ENCODE measurements at regions of chr9 and their contacts with region 1.

Region 1: DNA sequence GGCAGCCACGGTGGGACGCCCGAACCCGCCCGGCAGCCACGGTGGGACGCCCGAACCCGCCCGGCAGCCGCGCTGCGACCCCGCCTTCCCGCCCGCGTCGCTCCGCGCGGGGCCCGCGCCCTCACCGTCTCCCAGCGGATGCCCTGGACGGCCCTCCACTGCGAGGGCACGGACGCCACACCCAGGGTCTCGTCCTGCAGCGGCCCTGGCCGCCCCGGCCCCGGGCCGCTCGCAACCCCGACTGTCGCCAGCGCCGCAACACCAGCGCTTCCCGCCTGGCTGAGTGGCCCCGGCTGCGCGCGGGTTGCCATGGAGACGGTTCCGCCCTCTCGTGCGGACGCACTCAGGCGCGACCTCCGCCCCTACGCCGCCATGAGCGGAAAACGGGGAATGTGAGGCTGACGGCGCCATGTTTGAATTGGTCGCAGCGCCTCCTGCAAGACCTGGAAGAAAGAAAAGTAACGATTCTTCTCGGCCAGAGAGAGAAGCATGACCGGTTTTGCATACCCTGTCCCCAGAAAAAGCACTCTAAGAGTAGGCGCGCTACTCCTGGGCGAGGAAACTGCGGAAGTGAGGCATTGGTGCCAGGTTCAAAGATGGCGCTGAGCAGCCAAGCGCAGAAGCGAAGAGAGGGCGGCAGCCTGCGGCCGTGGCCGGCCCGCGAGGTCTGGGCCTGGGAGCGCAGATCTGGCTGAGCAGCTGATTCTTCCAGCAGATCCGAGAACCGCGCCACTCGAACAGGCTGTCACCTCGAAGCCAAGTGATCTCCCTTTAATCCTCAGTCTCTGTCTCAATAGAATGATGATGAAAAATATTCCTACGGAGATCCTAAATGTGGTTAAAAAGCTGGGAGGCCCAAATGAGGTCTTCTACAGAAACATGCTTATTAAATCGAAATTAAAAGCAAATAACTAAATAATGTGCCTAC is at the start of gene DYNC2I2:
- DNase-seq: peak; percentile 97
- H3K4me3 Mint-ChIP-seq: peak within 1 kb of the TSS; percentile 93
- H3K27ac Mint-ChIP-seq: peak within 1 kb of the TSS; percentile 100
- H3K4me1 Mint-ChIP-seq: peaks cover 11% of the 10 kb centered on the region
- H3K27me3 Mint-ChIP-seq: no peaks in the 10 kb centered on the region
- total RNA-seq, gene DYNC2I2: 32.4 to 32.8 TPM

Region 2: DNA sequence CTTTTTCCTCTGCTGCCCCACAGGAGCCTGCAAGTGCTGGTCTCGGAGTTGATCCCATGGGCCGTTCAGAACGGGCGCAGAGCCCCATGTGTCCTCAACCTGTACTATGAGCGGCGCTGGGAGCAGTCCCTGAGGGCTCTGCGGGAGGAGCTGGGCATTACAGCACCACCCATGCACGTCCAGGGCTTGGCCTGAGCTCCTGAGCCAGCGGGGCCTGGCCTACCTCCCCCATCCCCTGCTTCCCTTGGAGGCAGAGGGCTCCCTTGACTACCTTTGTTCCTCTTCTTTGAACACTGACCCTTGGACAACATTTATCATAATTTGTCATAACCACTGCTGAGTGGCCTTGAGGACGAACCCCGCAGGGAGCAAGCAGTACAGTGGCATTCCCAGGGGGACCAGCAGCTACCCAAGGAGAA is 323.2 kb before region 1 on chr9:
- CTCF ChIA-PET with region 1: no interaction called
- intact Hi-C with region 1: no loop called
- DNase-seq: no peak
- H3K4me3 Mint-ChIP-seq: no peak overlapping the region
- H3K27ac Mint-ChIP-seq: no peak overlapping the region
- H3K4me1 Mint-ChIP-seq: no peaks in the 10 kb centered on the region
- H3K27me3 Mint-ChIP-seq: no peaks in the 10 kb centered on the region

Region 3: DNA sequence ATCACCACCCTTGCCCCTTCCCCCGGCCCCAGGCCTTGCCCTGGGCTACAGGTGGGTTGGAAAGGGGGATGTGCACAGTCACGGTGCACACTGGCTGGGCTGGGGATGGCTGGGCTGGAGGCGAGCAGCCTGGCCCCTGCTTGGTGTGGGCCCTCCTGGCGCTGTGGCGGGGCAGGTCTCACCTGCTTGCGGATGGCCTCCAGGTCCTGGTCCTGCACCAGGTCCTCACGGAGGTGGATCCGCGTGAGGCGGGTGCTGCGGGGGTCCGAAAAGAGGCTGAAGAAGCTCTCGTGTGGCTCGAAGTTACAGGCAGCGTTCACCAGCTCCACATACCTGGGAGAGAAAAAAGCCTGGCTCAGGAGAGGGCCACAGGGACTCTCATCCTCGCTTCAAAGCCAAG is 96.9 kb after region 1 on chr9:
- CTCF ChIA-PET with region 1: no interaction called
- intact Hi-C with region 1: no loop called
- DNase-seq: no peak
- H3K4me3 Mint-ChIP-seq: no peak overlapping the region
- H3K27ac Mint-ChIP-seq: no peak overlapping the region
- H3K4me1 Mint-ChIP-seq: no peaks in the 10 kb centered on the region
- H3K27me3 Mint-ChIP-seq: no peaks in the 10 kb centered on the region

Region 4: DNA sequence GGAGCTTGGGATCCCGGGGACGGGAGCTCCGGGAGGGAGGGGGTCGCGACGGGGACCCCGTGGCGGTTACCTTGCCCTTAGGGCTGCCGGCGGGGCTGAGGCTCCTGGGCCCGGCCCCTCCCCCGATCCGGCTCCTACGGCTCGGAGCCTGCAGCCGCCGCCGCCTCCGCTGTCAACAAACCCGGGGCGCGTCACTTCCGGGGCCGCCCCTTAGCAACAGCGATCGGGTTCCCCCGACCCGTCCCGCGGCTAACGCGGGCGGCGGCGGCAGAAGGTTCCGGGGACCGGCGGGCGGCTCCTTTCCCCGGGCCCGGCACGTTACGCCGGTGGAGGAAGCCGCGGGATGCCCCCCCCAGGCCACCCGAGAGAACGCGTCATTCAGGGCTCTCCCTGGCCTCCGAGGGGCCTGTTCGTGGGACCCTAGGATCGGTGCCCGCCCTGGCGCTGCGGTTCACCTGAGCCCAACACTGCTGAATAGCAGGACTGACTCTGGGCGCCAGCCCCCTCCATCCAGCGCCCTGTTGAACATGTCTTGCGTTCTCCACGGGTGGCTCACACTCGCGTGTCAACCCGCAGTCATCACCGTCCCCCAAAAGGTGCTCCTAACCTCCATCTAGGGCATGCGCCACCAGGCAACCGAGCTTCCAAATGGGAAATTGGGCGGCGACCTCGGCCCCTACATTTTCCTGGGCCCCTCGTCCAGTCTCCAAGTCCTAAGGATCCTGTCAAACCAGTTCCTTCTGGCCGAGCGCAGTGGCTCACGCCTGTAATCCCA is 115.3 kb after region 1 on chr9 and contains the start of gene ZER1:
- CTCF ChIA-PET with region 1: no interaction called
- intact Hi-C with region 1: loop called (anchors 5 kb)
- DNase-seq: peak; percentile 95
- H3K4me3 Mint-ChIP-seq: peak within 1 kb of the TSS; percentile 95
- H3K27ac Mint-ChIP-seq: peak within 1 kb of the TSS; percentile 90
- H3K4me1 Mint-ChIP-seq: peaks cover 24% of the 10 kb centered on the region
- H3K27me3 Mint-ChIP-seq: no peaks in the 10 kb centered on the region
- total RNA-seq, gene ZER1: 9.9 to 11.0 TPM

Region 5: DNA sequence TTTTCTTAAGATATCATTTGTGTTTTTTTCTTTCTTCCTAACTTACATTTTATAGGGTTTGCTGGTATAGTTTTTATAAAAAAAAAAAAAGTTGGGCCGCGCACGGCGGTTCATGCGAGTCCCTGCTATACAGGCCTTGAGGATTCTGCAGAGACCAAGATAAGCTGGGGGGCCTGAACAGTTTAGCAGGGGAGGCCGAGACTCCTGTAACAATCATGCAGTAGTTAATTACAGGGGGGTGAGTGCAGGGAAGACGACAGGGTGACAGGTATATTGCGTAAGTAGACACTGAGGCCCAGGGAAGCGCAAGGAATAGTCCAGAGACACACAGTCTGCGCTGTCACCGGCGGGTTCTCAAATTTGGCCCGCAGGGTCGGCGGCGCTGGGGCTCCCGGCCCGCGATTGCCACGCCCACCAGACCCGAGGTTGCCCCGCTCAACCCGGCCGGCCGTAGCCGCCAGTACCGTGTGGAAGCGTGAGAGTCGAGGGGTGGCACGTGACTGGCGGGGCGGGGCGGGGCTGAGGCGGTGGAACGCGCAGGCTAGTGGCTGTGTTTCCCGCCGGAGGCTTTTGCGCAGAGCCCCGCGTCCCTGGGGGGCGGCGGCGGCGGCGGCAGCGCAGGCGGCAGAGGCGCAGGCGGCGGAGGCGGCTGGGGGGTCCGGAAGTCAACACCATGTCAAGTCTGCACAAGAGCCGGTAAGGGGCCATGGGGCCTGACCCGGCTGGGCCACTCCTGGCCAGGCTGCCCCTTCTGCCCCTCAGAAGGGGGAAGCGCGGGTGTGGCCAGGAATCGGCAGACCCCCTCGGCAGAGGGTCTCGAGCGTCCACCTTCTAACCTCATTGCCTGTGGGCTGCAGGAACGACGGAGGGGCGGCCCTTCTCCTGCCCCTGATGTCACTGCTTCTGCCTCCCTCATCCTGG is 130.3 kb after region 1 on chr9 and contains the start of gene TBC1D13:
- CTCF ChIA-PET with region 1: no interaction called
- intact Hi-C with region 1: loop called (anchors 5 kb)
- DNase-seq: peak; percentile 91
- H3K4me3 Mint-ChIP-seq: peak within 1 kb of the TSS; percentile 90
- H3K27ac Mint-ChIP-seq: peak within 1 kb of the TSS; percentile 81
- H3K4me1 Mint-ChIP-seq: peaks cover 26% of the 10 kb centered on the region
- H3K27me3 Mint-ChIP-seq: no peaks in the 10 kb centered on the region
- total RNA-seq, gene TBC1D13: 8.3 to 9.0 TPM

Region 6: GRCh38 chr9:128927731-128928411 is 271.2 kb after region 1 on chr9:
- CTCF ChIA-PET with region 1: no interaction called
- intact Hi-C with region 1: no loop called
- DNase-seq: peak; percentile 68
- H3K4me3 Mint-ChIP-seq: no peak overlapping the region
- H3K27ac Mint-ChIP-seq: no peak overlapping the region
- H3K4me1 Mint-ChIP-seq: peaks cover 10% of the 10 kb centered on the region
- H3K27me3 Mint-ChIP-seq: no peaks in the 10 kb centered on the region

Region 7: GRCh38 chr9:129610473-129611301 is 954.0 kb after region 1 on chr9:
- CTCF ChIA-PET with region 1: no interaction called
- intact Hi-C with region 1: no loop called
- DNase-seq: peak; percentile 83
- H3K4me3 Mint-ChIP-seq: peak overlapping the region; percentile 71
- H3K27ac Mint-ChIP-seq: no peak overlapping the region
- H3K4me1 Mint-ChIP-seq: peaks cover 25% of the 10 kb centered on the region
- H3K27me3 Mint-ChIP-seq: no peaks in the 10 kb centered on the region